ENCODE measurements at regions of chr18 and their contacts with region 1.

Region 1: DNA sequence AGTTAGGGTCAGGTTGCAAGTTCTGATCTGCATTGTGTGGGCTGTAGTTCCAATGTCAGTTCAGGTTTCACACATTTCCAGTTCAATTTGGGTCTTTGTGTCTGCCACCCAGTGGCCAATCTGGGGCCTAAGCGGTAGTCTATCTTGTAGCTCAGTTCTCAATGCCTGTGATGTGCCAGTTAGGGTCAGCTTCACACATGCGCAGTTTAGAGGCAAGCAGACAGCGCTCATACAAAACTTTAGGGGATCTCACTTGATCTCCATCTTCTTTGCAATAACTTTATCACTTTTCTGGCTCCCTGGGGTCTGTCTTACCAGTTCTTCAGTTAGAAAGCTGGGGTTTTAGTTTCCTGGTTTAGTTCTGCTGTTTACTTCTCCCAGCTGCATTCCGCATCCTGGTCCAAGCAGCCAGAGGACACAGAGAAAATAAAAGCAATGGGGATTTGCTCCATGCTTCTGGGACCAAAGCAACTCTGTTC is 11.0 kb upstream of the ZNF24 start:
- DNase-seq: peak in 3 of 4 donors; percentile 60 to 88 (median 69)
- ATAC-seq: peak; percentile 99
- H3K4me3 ChIP-seq: no peak overlapping the region
- H3K27ac ChIP-seq: no peak overlapping the region
- H3K4me1 ChIP-seq: peaks cover 0 to 4% of the 10 kb centered on the region in 2 donors
- H3K27me3 ChIP-seq: no peaks in the 10 kb centered on the region
- CTCF ChIP-seq: peak; percentile 72 to 75

Region 2: DNA sequence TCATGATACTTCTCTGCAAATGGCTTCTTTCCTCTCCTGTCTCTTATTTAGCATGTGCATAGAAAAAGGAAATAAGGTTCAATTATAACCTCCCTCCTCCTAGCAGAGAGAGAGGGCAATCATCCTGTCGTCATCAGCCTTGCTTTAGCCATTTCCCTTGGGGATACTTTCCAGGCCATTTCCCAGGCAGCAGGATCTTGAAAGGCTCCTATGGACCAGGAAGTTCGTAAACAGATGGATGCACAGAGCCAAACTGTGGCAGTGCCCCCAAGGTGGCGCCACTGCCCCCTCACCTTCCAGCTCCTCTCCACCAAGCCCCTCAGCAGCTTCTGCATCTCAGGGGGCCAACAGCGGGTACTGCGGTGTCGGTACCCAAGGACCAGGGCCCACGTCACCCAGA is 487.7 kb before region 1 on chr18:
- intact Hi-C with region 1: loop called in 1 of 2 experiments (anchors 10 kb)
- DNase-seq: no peak
- ATAC-seq: no peak
- H3K4me3 ChIP-seq: no peak overlapping the region
- H3K27ac ChIP-seq: no peak overlapping the region
- H3K4me1 ChIP-seq: no peaks in the 10 kb centered on the region
- H3K27me3 ChIP-seq: no peaks in the 10 kb centered on the region
- CTCF ChIP-seq: no peak

Region 3: GRCh38 chr18:35178260-35178659 is 176.9 kb before region 1 on chr18:
- intact Hi-C with region 1: no loop called
- DNase-seq: no peak
- ATAC-seq: peak; percentile 38
- H3K4me3 ChIP-seq: no peak overlapping the region
- H3K27ac ChIP-seq: no peak overlapping the region
- H3K4me1 ChIP-seq: peaks cover 0 to 3% of the 10 kb centered on the region in 2 donors
- H3K27me3 ChIP-seq: no peaks in the 10 kb centered on the region
- CTCF ChIP-seq: no peak

Region 4: GRCh38 chr18:35236571-35237363 is 118.4 kb before region 1 on chr18:
- intact Hi-C with region 1: loop called in 1 of 2 experiments (anchors 5 kb)
- DNase-seq: no peak
- ATAC-seq: no peak
- H3K4me3 ChIP-seq: no peak overlapping the region
- H3K27ac ChIP-seq: no peak overlapping the region
- H3K4me1 ChIP-seq: peaks cover 3% of the 10 kb centered on the region in 2 donors
- H3K27me3 ChIP-seq: no peaks in the 10 kb centered on the region
- CTCF ChIP-seq: no peak

Region 5: GRCh38 chr18:35553300-35553699 is 198.1 kb after region 1 on chr18:
- intact Hi-C with region 1: no loop called
- DNase-seq: no peak
- ATAC-seq: no peak
- H3K4me3 ChIP-seq: no peak overlapping the region
- H3K27ac ChIP-seq: no peak overlapping the region
- H3K4me1 ChIP-seq: no peaks in the 10 kb centered on the region
- H3K27me3 ChIP-seq: no peaks in the 10 kb centered on the region
- CTCF ChIP-seq: no peak